Calu3 (cell line): ENCODE measurements at regions of chr11 and their contacts with region 1.

Region 1: DNA sequence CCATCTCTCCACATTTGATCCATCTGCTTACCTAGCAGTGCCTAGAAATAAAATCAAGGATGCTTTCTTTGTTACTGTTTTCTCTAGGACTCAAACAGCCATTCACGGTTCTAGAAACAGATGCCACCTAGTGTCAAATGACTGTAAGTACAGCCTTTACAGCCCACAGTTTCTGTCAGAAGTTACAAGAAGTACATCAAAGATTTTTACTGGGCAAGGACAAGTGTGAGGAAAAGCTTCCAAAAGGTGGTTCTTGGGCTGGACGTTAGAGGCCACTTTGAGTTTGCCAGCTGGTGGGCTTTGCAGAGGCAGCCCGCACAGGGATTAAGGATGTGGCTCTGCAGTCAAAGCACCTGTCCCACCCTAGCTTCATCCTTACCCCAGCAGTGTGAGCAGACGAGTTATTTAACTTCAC is 6.9 kb downstream of the KMT5B start:
- DNase-seq: no peak
- H3K4me3 Mint-ChIP-seq: no peak overlapping the region
- H3K27ac Mint-ChIP-seq: no peak overlapping the region
- H3K4me1 Mint-ChIP-seq: peaks cover 43% of the 10 kb centered on the region
- H3K27me3 Mint-ChIP-seq: no peaks in the 10 kb centered on the region
- CTCF ChIP-seq: peak; percentile 54

Region 2: DNA sequence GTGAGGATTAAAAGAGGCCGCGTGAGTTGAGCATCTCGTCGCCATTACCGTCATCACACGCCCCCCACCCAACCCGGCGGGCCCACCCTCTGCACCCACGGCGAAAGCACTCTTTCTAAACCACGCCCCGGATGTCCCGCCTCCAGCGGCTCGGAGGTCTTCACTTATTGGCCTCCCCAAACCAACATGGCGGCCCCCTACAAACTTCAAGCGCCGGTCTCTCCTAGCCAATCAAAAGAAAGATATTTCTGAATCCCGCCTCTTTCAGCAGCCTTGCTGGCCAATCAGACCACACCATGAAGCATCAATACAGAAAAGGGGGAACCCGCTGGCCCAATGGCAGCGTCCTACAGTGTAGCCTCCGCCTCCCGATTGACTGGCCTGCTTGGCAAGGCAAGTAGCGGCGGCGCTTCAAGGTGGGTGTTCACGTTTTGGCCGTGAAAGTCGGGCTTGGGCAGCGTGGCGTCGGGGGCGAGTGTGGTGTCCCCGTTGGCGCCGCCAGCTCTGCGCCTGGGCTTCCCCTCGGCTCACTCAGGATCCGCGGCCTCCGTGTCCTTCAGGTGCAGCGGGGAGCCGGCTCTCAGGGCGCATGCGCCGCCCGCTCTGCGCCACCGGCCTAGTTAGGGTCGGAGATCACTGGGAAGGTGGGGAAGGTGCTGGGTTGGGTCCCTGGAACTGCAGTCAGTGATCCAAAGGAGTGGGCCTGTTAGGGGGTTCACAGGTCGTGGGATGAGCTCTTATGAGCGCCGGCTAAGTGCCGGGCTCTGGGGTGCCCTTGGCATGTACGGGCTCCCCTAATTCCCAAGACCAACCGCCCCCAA is 175.7 kb before region 1 on chr11 and contains the start of gene NDUFS8:
- CTCF ChIA-PET with region 1: no interaction called
- intact Hi-C with region 1: loop called (anchors 10 kb)
- DNase-seq: peak; percentile 93
- H3K4me3 Mint-ChIP-seq: peak within 1 kb of the TSS; percentile 98
- H3K27ac Mint-ChIP-seq: peak within 1 kb of the TSS; percentile 96
- H3K4me1 Mint-ChIP-seq: peaks cover 31% of the 10 kb centered on the region
- H3K27me3 Mint-ChIP-seq: no peaks in the 10 kb centered on the region
- CTCF ChIP-seq: no peak
- total RNA-seq, gene NDUFS8: 163 and 166 TPM in 2 replicates

Region 3: DNA sequence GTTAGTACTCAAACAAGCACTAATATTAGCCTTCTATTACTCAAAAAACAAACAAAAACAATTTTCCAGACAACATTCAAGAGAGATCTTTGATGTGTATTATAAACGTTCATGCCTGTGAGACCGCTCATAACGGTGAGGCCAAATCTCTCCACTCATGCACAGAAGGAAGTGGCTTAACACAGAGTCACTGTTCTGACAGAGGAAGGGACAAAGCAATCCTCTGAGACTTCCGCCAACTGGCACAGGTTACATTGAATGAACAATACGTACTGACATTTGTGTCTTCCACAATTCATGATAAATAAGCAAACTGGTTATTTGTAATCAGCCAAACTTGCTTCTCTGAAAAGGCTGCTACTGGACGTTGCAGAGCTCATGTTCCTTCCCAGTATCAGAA is 115.5 kb before region 1 on chr11:
- CTCF ChIA-PET with region 1: interaction called, 7 read pairs
- intact Hi-C with region 1: loop called (anchors 5 kb)
- DNase-seq: peak; percentile 43
- H3K4me3 Mint-ChIP-seq: peak overlapping the region; percentile 56
- H3K27ac Mint-ChIP-seq: peak overlapping the region; percentile 63
- H3K4me1 Mint-ChIP-seq: peaks cover 41% of the 10 kb centered on the region
- H3K27me3 Mint-ChIP-seq: no peaks in the 10 kb centered on the region
- CTCF ChIP-seq: no peak

Region 4: GRCh38 chr11:68106165-68106957 is 99.8 kb before region 1 on chr11:
- CTCF ChIA-PET with region 1: interaction called, 14 read pairs
- intact Hi-C with region 1: loop called (anchors 5 kb)
- DNase-seq: peak; percentile 78
- H3K4me3 Mint-ChIP-seq: peak overlapping the region; percentile 50
- H3K27ac Mint-ChIP-seq: peak overlapping the region; percentile 78
- H3K4me1 Mint-ChIP-seq: peaks cover 51% of the 10 kb centered on the region
- H3K27me3 Mint-ChIP-seq: no peaks in the 10 kb centered on the region
- CTCF ChIP-seq: no peak

Region 5: GRCh38 chr11:68189082-68189481 is 17.1 kb before region 1 on chr11:
- CTCF ChIA-PET with region 1: interaction called, 9 read pairs
- intact Hi-C with region 1: loop called (anchors 2 kb)
- DNase-seq: no peak
- H3K4me3 Mint-ChIP-seq: no peak overlapping the region
- H3K27ac Mint-ChIP-seq: no peak overlapping the region
- H3K4me1 Mint-ChIP-seq: peaks cover 17% of the 10 kb centered on the region
- H3K27me3 Mint-ChIP-seq: no peaks in the 10 kb centered on the region
- CTCF ChIP-seq: no peak